ENCODE measurements at regions of chr3 and their contacts with region 1.

Region 1: GRCh38 chr3:60708191-60708975 is 542.9 kb downstream of the FHIT start:
- DNase-seq: no peak
- H3K4me3 Mint-ChIP-seq: no peak overlapping the region
- H3K27ac Mint-ChIP-seq: no peak overlapping the region
- H3K4me1 Mint-ChIP-seq: no peaks in the 10 kb centered on the region
- H3K27me3 Mint-ChIP-seq: no peaks in the 10 kb centered on the region
- CTCF ChIP-seq: no peak

Region 2: GRCh38 chr3:60594025-60594424 is 114.4 kb before region 1 on chr3:
- CTCF ChIA-PET with region 1: no interaction called
- intact Hi-C with region 1: no loop called
- DNase-seq: no peak
- H3K4me3 Mint-ChIP-seq: no peak overlapping the region
- H3K27ac Mint-ChIP-seq: no peak overlapping the region
- H3K4me1 Mint-ChIP-seq: no peaks in the 10 kb centered on the region
- H3K27me3 Mint-ChIP-seq: no peaks in the 10 kb centered on the region
- CTCF ChIP-seq: no peak

Region 3: GRCh38 chr3:61520966-61521628 is 812.7 kb after region 1 on chr3:
- CTCF ChIA-PET with region 1: no interaction called
- intact Hi-C with region 1: loop called (anchors 5 kb)
- DNase-seq: no peak
- H3K4me3 Mint-ChIP-seq: no peak overlapping the region
- H3K27ac Mint-ChIP-seq: no peak overlapping the region
- H3K4me1 Mint-ChIP-seq: no peaks in the 10 kb centered on the region
- H3K27me3 Mint-ChIP-seq: no peaks in the 10 kb centered on the region
- CTCF ChIP-seq: no peak

Measured in Calu3 (cell line).